Transverse colon (tissue), 4 donors: ENCODE measurements at regions of chr1 and their contacts with region 1.

Region 1: GRCh38 chr1:176617881-176618280 is 154.9 kb downstream of the PAPPA2 start:
- DNase-seq: no peak
- H3K4me3 ChIP-seq: no peak overlapping the region
- H3K27ac ChIP-seq: no peak overlapping the region
- H3K4me1 ChIP-seq: no peaks in the 10 kb centered on the region
- H3K27me3 ChIP-seq: no peaks in the 10 kb centered on the region
- CTCF ChIP-seq: no peak
- EP300 ChIP-seq: no peak
- POLR2A ChIP-seq: no peak

Region 2: DNA sequence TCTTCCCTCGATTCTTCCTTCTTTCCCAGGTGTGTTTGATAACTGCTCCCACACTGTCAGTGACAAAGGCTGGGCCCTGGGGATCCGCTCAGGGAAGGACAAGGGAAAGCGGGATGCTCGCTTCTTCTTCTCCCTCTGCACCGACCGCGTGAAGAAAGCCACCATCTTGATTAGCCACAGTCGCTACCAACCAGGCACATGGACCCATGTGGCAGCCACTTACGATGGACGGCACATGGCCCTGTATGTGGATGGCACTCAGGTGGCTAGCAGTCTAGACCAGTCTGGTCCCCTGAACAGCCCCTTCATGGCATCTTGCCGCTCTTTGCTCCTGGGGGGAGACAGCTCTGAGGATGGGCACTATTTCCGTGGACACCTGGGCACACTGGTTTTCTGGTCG is 23.4 kb before region 1 on chr1:
- in situ Hi-C with region 1: no loop called
- intact Hi-C with region 1: loop called (anchors 2 kb)
- DNase-seq: no peak
- H3K4me3 ChIP-seq: no peak overlapping the region
- H3K27ac ChIP-seq: no peak overlapping the region
- H3K4me1 ChIP-seq: no peaks in the 10 kb centered on the region
- H3K27me3 ChIP-seq: no peaks in the 10 kb centered on the region
- CTCF ChIP-seq: no peak
- EP300 ChIP-seq: no peak
- POLR2A ChIP-seq: no peak

Region 3: DNA sequence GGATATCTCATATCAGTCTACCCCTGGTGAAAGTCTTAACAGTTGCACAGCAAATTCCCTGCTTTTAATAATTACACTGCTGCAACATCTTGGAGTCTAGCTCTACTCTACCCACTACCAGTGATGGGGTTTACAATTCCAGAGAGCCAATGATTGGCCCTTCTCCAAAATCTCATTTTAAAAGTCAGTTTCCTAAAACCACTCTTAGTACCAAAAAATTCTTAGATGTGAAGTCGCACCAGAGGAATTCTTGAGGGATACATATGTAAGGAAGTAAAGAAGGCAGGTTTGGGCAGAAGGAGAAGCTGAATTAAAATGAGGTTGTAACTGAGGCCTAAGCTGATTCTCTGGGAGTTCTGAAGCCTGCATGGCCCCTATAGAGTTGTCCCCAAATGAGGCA is 682.5 kb after region 1 on chr1:
- in situ Hi-C with region 1: no loop called
- intact Hi-C with region 1: no loop called
- DNase-seq: no peak
- H3K4me3 ChIP-seq: no peak overlapping the region
- H3K27ac ChIP-seq: no peak overlapping the region
- H3K4me1 ChIP-seq: no peaks in the 10 kb centered on the region
- H3K27me3 ChIP-seq: no peaks in the 10 kb centered on the region
- CTCF ChIP-seq: no peak
- EP300 ChIP-seq: no peak
- POLR2A ChIP-seq: no peak